HCT116 (cell line): ENCODE measurements at regions of chr7 and their contacts with region 1.

Region 1: DNA sequence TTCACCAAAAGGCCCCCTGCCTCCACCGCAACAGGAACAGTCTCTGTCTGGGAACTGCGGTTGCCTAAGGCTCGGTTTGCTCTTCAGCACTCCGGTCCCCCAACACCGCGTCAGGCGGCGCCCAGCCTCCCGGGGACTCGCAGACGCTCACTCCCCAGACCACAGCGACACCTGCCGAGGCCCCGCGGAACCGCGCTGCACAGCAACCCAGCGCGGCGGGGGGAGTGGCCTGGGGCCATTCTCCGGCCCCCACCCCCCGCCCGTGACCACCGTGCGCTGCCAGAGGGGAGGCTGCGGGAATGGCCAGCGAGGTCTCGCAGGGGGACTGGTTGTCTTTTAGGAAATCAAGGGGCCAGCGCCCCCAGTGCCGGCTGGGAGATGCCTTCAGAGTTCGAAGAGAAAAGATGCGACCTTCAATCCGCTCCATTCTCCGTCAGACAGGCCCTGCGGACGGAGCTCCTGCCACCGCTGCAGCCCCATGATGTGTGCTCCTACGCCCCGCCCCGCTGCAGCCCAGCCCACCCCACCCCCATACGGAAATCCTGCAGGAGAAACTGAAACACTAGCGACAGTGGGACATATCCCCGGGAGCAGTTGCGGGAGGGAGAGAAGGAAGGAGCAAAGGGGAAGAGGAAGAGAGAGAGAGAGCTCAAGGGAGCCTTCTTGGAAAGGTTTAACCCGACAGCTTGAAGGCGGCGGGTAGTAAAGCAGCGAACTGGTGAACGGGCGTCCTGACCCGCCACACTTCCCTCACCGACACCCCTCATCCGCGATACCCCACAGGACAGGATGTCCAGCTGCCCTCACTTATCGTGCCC is 137.4 kb upstream of the CDCA7L start:
- DNase-seq: peak; percentile 53
- ATAC-seq: peak; percentile 95
- H3K4me3 ChIP-seq: peak overlapping the region; percentile 61 to 63
- H3K27ac ChIP-seq: peak overlapping the region; percentile 52
- H3K4me1 ChIP-seq: peaks cover 10 to 16% of the 10 kb centered on the region in 2 experiments; a peak in 3 of 4 replicates
- H3K27me3 ChIP-seq: no peaks in the 10 kb centered on the region
- CTCF ChIP-seq: peak; percentile 81 to 98 (median 88)
- POLR2A ChIP-seq: no peak
- RAD21 ChIP-seq: peak; percentile 90

Region 2: GRCh38 chr7:21261627-21262594 is 821.2 kb before region 1 on chr7:
- CTCF ChIA-PET with region 1: interaction called, 10 read pairs
- POLR2A ChIA-PET with region 1: no interaction called
- RAD21 ChIA-PET with region 1: no interaction called
- intact Hi-C with region 1: loop called (anchors 2 kb)
- DNase-seq: peak; percentile 44
- ATAC-seq: peak; percentile 98
- H3K4me3 ChIP-seq: no peak overlapping the region
- H3K27ac ChIP-seq: no peak overlapping the region
- H3K4me1 ChIP-seq: no peaks in the 10 kb centered on the region
- H3K27me3 ChIP-seq: no peaks in the 10 kb centered on the region
- CTCF ChIP-seq: peak; percentile 69 to 79 (median 74)
- POLR2A ChIP-seq: no peak
- RAD21 ChIP-seq: peak; percentile 68

Region 3: GRCh38 chr7:21427182-21427870 is 655.8 kb before region 1 on chr7:
- CTCF ChIA-PET with region 1: no interaction called
- POLR2A ChIA-PET with region 1: no interaction called
- RAD21 ChIA-PET with region 1: no interaction called
- intact Hi-C with region 1: loop called (anchors 2 kb)
- DNase-seq: peak; percentile 94
- ATAC-seq: peak; percentile 79
- H3K4me3 ChIP-seq: peak overlapping the region; percentile 55 to 60
- H3K27ac ChIP-seq: peak overlapping the region; percentile 88
- H3K4me1 ChIP-seq: peaks cover 5 to 16% of the 10 kb centered on the region in 2 experiments; a peak in 3 of 4 replicates
- H3K27me3 ChIP-seq: no peaks in the 10 kb centered on the region
- CTCF ChIP-seq: no peak
- POLR2A ChIP-seq: peak; percentile 11
- RAD21 ChIP-seq: no peak

Region 4: DNA sequence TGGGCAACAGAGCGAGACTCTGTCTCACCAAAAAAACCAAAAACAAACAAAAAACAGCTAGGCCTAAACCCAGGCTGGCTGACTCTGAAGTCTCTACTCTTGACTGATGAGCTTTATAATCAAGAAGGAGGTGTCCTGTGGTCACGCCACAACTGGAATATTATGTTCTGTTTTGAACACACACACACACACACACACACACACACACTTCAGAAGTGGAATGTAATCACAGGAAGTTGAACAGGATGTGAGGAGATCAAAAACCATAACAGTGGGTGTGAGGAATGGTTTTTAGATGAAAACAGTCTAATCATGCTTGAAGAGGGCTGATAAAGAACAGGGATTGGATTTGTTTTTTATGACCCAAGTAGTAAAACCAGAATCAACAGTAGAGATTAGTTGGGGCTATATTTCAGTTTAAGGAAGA is 592.8 kb after region 1 on chr7:
- CTCF ChIA-PET with region 1: no interaction called
- POLR2A ChIA-PET with region 1: no interaction called
- RAD21 ChIA-PET with region 1: no interaction called
- intact Hi-C with region 1: no loop called
- DNase-seq: no peak
- ATAC-seq: no peak
- H3K4me3 ChIP-seq: no peak overlapping the region
- H3K27ac ChIP-seq: no peak overlapping the region
- H3K4me1 ChIP-seq: no peaks in the 10 kb centered on the region
- H3K27me3 ChIP-seq: no peaks in the 10 kb centered on the region
- CTCF ChIP-seq: no peak
- POLR2A ChIP-seq: no peak
- RAD21 ChIP-seq: no peak